ENCODE measurements at regions of chr3 and their contacts with region 1.

Region 1: DNA sequence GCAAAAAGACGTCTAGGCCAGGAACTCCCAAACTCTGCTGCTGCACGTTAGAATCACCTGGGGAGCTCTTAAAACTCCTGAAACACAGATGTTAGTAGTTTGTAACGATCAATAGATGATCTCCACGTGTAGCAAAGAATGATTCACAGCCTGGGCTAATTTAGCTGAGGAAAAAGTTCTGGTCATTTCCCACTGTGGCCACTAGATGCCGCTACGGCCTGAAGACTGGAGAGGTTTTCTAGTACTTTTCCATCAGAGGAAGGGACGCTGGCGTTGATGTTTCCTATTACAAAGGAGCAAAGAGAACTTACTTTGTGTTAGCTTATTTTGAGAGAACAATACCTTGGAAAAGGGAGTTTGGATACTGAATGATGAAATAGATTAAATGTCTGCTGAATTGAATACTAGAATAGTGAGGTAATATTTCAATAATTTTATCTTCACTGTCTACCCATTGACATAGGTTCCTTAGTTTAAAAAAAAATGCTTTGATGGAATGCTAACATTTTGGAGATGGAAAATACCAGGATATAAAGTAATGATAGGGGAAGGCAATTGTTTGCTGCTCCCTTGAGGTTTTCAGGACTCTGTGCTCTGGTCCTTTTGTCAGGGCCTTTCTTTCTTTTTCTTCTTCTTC is 159.1 kb downstream of the P3H2 start:
- DNase-seq: peak; percentile 56
- H3K4me3 ChIP-seq: no peak overlapping the region
- H3K27ac ChIP-seq: no peak overlapping the region
- H3K27me3 ChIP-seq: no peaks in the 10 kb centered on the region
- CTCF ChIP-seq: peak; percentile 91

Region 2: GRCh38 chr3:189947948-189948723 is 13.5 kb before region 1 on chr3:
- CTCF ChIA-PET with region 1: interaction called, 49 read pairs
- POLR2A ChIA-PET with region 1: no interaction called
- DNase-seq: no peak
- H3K4me3 ChIP-seq: no peak overlapping the region
- H3K27ac ChIP-seq: no peak overlapping the region
- H3K27me3 ChIP-seq: peaks cover 3% of the 10 kb centered on the region
- CTCF ChIP-seq: peak; percentile 66

Region 3: DNA sequence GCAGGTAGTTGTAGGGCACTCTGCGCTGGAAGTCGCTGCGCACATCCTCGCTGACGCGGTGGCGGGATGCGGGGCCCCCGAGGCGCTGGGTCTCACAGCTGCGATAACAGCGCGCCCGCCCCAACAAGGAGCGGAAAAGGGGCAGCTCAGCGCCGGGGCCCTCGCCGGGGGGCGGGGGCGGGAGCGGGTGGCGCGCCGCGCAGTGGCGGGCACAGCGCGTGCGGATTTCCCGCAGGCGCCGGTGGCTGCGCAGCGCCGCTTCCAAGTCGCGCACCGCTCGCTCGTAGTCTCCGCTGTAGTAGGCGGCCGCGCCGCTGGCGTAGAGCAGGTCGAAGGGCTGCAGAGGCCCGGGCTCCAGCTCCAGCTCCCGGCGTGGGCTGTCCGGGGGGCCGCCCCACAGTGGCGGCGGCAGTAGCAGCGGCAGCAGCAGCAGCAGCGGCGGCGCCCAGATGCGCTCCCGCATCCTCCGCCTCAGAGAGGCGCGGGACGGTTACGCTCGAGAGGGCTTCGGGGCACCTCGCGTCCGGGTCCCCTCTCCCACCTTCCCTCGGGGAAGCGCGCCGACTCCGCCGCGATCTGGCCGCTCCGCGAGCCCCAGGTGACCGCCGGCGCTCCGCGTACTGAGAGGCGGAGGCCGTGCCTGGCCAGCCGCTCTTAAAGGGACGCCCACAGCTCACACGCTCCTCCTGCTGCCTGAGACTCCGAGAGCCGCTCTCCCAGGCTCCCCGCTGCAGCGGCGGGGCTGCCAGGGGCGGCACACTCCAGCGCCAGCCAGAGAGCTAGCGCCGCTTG is 158.8 kb after region 1 on chr3 and contains the start of gene P3H2:
- CTCF ChIA-PET with region 1: interaction called, 20 read pairs
- POLR2A ChIA-PET with region 1: no interaction called
- DNase-seq: peak; percentile 78
- H3K4me3 ChIP-seq: peak within 1 kb of the TSS; percentile 75
- H3K27ac ChIP-seq: no peak within 1 kb of the TSS
- H3K27me3 ChIP-seq: no peaks in the 10 kb centered on the region
- CTCF ChIP-seq: peak; percentile 62
- polyA plus RNA-seq, gene P3H2: 23.8 and 32.6 TPM in 2 replicates

Region 4: DNA sequence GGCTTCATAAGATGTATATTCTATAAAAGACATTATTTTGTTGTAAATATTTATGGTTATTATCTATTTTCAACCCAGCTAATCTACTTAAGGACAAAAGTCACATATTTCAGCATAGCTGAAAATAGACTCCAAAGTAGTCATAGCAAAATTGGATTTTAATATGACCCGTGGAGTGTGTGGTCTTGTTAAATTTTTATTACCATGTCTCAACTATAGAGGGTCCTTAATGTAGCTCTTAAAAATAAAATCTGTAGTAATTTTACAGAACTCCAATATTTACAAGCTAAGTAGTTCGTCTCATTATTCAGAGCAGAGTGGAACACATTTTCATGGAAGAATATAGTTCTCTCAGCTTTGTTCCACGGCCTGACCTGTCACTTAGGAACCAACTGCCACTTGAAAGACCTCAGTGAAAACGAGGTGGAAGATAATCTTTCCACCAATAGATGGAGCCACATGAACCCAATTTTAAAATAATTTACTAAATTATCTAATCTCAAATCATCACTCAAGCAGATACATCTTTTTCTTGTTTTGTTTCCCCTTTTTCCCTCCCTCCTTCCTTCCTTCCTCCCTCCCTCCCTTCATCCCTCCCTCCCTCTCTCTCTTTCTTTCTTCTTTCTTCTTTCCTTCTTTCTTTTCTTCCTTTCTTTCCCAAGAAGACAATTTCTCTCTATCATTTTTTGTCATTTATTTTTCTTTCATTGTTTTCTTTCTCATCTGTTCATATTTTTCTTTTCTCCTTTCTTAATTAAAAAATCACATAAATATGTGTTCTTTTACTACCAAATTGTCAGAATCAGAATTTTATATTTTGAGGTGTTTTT is 263.4 kb after region 1 on chr3:
- CTCF ChIA-PET with region 1: interaction called, 46 read pairs
- POLR2A ChIA-PET with region 1: no interaction called
- DNase-seq: no peak
- H3K4me3 ChIP-seq: no peak overlapping the region
- H3K27ac ChIP-seq: no peak overlapping the region
- H3K27me3 ChIP-seq: no peaks in the 10 kb centered on the region
- CTCF ChIP-seq: peak; percentile 55

Region 5: DNA sequence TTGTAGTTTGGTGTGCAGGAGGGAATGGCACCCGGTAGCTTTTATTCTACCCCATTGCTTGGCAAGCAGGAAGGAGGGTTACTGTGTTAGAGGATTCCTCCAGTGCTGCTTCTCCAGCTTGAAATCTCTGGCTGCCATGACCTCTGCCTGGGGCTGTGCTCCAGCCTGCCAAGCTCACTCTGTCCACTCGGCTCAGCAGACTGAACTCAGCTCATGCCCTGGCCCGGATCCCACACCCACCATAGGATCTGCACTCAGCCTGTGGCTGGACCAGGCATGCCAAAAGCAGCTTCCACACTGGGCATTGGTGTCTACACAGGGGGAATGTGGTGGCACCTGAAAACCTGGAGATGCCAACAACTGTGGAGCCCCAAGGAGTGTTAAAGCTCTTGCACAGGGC is 452.7 kb after region 1 on chr3:
- CTCF ChIA-PET with region 1: interaction called, 15 read pairs
- POLR2A ChIA-PET with region 1: no interaction called
- DNase-seq: no peak
- H3K4me3 ChIP-seq: no peak overlapping the region
- H3K27ac ChIP-seq: no peak overlapping the region
- H3K27me3 ChIP-seq: no peaks in the 10 kb centered on the region
- CTCF ChIP-seq: no peak

Region 6: GRCh38 chr3:190701096-190701532 is 739.5 kb after region 1 on chr3:
- CTCF ChIA-PET with region 1: interaction called, 68 read pairs
- POLR2A ChIA-PET with region 1: no interaction called
- DNase-seq: no peak
- H3K4me3 ChIP-seq: no peak overlapping the region
- H3K27ac ChIP-seq: no peak overlapping the region
- H3K27me3 ChIP-seq: no peaks in the 10 kb centered on the region
- CTCF ChIP-seq: peak; percentile 70